ENCODE measurements at regions of chr4 and their contacts with region 1.

Region 1: GRCh38 chr4:7070729-7071511 is 3.1 kb upstream of the GRPEL1 start:
- DNase-seq: peak; percentile 92
- H3K4me3 ChIP-seq: no peak overlapping the region
- H3K27ac ChIP-seq: no peak overlapping the region
- H3K4me1 ChIP-seq: peaks cover 13% of the 10 kb centered on the region
- H3K27me3 ChIP-seq: no peaks in the 10 kb centered on the region
- CTCF ChIP-seq: peak; percentile 99

Region 2: GRCh38 chr4:6855692-6856297 is 215.1 kb before region 1 on chr4:
- intact Hi-C with region 1: no loop called
- DNase-seq: no peak
- H3K4me3 ChIP-seq: no peak overlapping the region
- H3K27ac ChIP-seq: no peak overlapping the region
- H3K4me1 ChIP-seq: no peaks in the 10 kb centered on the region
- H3K27me3 ChIP-seq: no peaks in the 10 kb centered on the region
- CTCF ChIP-seq: no peak

Region 3: GRCh38 chr4:6909073-6909965 is 161.6 kb before region 1 on chr4 and contains the start of gene TBC1D14:
- intact Hi-C with region 1: loop called (anchors 2 kb)
- DNase-seq: peak; percentile 86
- H3K4me3 ChIP-seq: peak within 1 kb of the TSS; percentile 48
- H3K27ac ChIP-seq: peak within 1 kb of the TSS; percentile 96
- H3K4me1 ChIP-seq: peaks cover 4% of the 10 kb centered on the region
- H3K27me3 ChIP-seq: no peaks in the 10 kb centered on the region
- CTCF ChIP-seq: no peak
- total RNA-seq, gene TBC1D14: 43.2 to 46.6 TPM